ENCODE measurements at regions of chr7 and their contacts with region 1.

Region 1: DNA sequence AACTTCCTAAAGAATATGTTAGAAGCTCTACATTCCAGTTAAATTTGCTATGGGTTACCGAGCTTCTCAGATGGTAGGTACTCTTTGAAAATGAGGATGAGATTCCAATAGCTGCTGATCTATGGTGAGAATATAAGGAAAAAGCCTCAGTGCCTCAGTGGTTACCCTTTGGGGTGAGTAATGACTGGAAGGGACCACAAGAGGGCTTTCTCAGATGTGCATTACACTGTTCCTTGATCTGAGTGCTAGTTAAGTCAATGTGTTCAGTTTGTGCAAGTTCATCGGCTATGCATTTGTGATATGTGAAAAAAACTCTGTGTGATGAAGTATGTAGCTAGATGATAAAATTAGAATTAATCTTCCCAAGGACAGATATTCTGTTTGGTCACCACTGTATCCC is 3.5 kb downstream of the NRCAM start:
- DNase-seq: peak; percentile 28
- ATAC-seq: peak; percentile 66
- H3K4me3 ChIP-seq: no peak overlapping the region
- H3K27ac ChIP-seq: no peak overlapping the region
- H3K4me1 ChIP-seq: no peaks in the 10 kb centered on the region
- H3K27me3 ChIP-seq: peaks cover 68% of the 10 kb centered on the region
- CTCF ChIP-seq: peak; percentile 62

Region 2: DNA sequence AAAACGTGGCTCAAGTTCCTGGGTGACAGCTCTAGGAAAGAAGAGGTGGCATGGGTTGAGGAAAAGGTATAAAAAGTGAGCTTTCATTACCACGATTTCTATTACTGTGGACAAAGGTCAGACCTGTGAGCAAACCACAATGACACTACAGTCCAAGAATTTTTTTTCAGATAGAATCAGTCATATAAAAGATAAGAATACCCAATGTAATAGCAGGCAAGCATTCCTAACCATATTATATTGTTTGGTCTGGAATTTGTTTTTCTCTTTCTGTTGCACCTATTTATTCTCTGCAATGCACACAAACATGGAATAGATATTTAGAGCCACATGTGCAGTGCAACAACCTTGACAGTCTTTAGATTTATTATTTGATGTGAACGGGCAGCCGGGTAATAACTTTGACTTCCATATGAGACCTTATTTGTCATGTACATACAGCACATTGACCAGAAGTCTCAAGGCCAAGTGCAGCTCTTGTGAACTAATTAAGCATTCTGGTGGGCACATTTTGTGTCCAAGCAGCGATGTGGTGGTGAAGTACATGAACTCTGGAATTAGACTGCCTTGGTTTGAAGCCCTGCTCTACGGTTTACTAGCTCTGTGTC is 153.3 kb before region 1 on chr7:
- CTCF ChIA-PET with region 1: no interaction called
- POLR2A ChIA-PET with region 1: no interaction called
- intact Hi-C with region 1: loop called (anchors 5 kb)
- DNase-seq: peak; percentile 70
- ATAC-seq: peak; percentile 71
- H3K4me3 ChIP-seq: no peak overlapping the region
- H3K27ac ChIP-seq: no peak overlapping the region
- H3K4me1 ChIP-seq: peaks cover 10% of the 10 kb centered on the region
- H3K27me3 ChIP-seq: no peaks in the 10 kb centered on the region
- CTCF ChIP-seq: no peak

Region 3: GRCh38 chr7:108643138-108643537 is 190.4 kb after region 1 on chr7:
- CTCF ChIA-PET with region 1: no interaction called
- POLR2A ChIA-PET with region 1: no interaction called
- intact Hi-C with region 1: no loop called
- DNase-seq: no peak
- ATAC-seq: no peak
- H3K4me3 ChIP-seq: no peak overlapping the region
- H3K27ac ChIP-seq: no peak overlapping the region
- H3K4me1 ChIP-seq: no peaks in the 10 kb centered on the region
- H3K27me3 ChIP-seq: no peaks in the 10 kb centered on the region
- CTCF ChIP-seq: no peak

Measured in PC-3 (cell line).